ENCODE measurements at regions of chr18 and their contacts with region 1.

Region 1: DNA sequence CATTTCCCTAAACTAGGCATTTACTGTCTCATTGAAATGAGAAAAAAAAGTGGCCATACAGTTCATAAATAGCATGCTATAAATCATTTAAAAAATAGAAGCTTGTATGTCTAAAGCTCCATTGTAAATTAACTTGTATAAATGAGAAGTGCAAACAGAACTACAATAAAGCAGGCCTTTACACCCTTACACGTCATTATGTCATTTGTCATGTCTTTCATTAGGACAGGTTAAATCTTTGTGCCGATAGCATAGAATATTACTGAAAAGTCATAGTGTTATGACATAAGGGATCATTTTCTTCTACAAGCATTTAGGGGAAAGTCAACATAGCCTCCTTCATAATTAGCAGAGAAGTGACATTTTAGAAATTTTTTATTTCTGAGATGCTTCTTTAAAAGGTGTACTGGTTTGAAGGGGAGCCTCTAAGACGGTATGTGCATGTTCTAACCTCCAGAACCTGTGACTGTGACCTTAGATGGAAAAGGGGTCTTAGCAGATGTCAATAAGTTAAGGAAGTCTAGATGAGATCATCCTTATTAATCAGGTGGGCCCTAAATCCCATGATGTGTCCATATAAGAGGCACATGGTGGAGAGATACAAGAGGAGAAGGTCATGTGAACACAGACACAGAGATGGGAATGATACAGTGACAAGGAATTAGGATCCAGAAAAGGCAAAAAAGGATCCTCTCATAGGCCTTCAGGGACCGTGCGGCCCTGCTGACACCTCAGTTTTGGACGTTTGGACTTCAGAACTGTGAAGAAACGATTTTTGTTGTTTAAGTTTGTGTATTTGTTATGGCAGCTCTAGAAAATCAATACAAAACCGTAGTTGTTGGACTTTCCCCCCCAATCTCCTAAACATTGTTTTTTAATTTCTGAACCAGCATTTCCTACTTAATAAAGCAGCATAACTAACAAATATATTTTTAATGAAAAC is 863.7 kb downstream of the MBD2 start:
- DNase-seq: no peak
- H3K4me3 Mint-ChIP-seq: no peak overlapping the region
- H3K27ac Mint-ChIP-seq: no peak overlapping the region
- H3K4me1 Mint-ChIP-seq: no peaks in the 10 kb centered on the region
- H3K27me3 Mint-ChIP-seq: no peaks in the 10 kb centered on the region
- CTCF ChIP-seq: no peak

Region 2: DNA sequence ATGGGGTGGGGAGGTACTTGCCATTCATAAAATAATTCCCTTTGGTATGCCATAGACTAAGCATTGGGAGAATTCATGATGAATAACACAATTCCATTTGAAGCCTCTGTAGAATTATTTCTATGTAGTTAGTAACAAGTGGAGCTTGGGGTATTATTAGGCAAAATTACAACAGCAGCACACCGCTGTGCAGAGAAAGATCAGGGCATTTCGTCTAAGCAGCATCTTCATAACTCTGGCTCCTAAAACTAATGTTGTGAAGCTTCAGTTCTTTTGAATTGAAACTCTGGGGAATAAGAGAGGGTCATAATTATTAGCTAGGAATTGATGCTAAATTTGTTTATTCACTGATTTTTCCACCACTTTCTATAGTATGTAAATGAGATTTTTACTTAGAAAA is 390.1 kb before region 1 on chr18:
- CTCF ChIA-PET with region 1: no interaction called
- POLR2A ChIA-PET with region 1: no interaction called
- intact Hi-C with region 1: no loop called
- DNase-seq: no peak
- H3K4me3 Mint-ChIP-seq: no peak overlapping the region
- H3K27ac Mint-ChIP-seq: no peak overlapping the region
- H3K4me1 Mint-ChIP-seq: no peaks in the 10 kb centered on the region
- H3K27me3 Mint-ChIP-seq: no peaks in the 10 kb centered on the region
- CTCF ChIP-seq: no peak

Region 3: DNA sequence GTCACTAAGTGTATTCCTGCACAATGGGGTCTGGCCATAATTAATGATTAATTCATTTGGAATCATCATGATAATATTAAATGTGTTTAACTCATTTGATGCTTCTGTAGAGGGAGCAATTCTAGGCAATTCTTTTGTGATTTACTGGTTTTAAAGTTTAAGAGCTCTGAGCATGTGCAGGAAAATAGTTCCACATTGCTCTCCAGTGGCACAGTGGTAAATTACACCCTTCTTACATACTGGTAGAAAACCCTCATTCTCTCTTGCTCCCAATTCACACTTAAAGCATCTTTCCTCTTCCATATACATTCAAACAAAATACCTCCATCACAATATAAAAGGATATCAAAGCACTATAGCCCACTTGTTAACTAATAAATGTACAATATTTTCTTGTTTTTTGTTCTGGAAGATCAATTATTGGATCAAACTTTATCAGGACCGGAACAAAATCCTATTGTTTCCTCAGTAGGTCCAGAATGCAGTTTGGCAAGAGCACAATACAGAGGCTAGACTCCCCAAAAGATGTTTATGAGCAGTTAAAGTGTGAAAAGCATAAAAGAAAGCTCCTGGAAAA is 19.4 kb after region 1 on chr18:
- CTCF ChIA-PET with region 1: interaction called, 13 read pairs
- POLR2A ChIA-PET with region 1: no interaction called
- intact Hi-C with region 1: no loop called
- DNase-seq: peak; percentile 50
- H3K4me3 Mint-ChIP-seq: no peak overlapping the region
- H3K27ac Mint-ChIP-seq: no peak overlapping the region
- H3K4me1 Mint-ChIP-seq: no peaks in the 10 kb centered on the region
- H3K27me3 Mint-ChIP-seq: no peaks in the 10 kb centered on the region
- CTCF ChIP-seq: peak; percentile 46